PC-9 (cell line): ENCODE measurements at regions of chr5 and their contacts with region 1.

Region 1: DNA sequence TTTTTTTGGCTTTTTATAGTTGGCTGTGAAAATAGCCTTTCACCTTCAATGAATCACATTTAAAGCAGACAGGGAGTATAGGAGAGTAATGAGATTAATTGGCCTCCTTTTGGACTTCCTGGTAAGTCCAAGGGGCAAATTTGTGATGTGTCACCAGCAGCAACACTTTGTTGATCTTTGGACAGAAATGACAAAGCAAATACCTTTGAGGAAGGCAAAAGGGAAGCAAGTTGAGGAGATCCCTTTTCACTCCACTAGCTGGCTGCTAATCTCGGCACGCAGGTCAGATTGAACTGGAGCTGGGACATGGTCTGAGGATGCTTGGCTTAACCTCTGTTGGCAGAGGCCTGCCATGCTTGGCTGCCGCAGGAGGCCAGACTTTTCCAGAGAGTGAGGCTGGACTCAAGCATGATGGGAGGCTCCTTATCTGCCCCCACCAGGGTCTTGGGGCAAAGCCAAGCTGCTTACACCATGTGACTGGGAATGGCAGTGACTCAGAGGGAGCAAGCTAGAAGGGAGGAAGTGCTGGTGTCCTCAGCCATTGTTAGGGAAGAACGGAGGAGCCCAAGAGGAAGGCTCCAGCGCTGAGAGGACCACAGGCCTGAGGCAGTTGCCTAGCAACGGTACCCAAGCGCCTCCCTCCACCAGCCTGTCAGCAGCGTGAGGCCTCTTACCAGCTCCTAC is 174.5 kb upstream of the MAP1B start:
- DNase-seq: peak; percentile 77 to 99
- H3K4me3 ChIP-seq: no peak overlapping the region
- H3K27ac ChIP-seq: peak overlapping the region; percentile 97
- H3K4me1 ChIP-seq: peaks cover 42% of the 10 kb centered on the region
- H3K27me3 ChIP-seq: no peaks in the 10 kb centered on the region
- CTCF ChIP-seq: peak; percentile 38; the same call in 1 of the 2 replicates

Region 2: DNA sequence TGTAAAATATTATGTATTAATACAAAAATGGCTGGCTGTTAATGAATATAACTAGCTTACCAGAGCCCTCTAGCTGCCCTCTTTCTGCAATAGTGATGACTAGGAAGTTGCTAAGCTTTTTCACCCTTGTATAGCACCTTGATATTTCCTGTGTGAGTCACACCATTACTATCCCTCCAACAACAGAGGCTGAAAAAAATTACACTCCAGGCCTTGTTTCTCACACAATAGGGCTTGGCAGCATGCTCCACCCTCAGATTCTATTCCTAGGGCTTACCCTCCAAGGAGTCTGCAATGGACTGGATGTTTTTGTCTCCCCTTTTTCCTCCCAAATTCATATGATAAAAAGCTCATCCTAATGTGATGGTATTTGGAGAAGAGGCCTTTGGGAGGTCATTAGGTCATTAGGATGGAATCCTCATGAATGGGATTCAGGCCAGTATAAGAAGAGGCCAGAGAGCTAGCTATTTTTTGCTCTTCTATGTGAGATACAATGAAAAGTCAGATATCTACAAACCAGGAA is 10.2 kb before region 1 on chr5:
- CTCF ChIA-PET with region 1: interaction called, 5 read pairs
- POLR2A ChIA-PET with region 1: interaction called, 19 read pairs
- intact Hi-C with region 1: no loop called
- DNase-seq: peak; percentile 66 to 92
- H3K4me3 ChIP-seq: no peak overlapping the region
- H3K27ac ChIP-seq: peak overlapping the region; percentile 94
- H3K4me1 ChIP-seq: peaks cover 36% of the 10 kb centered on the region
- H3K27me3 ChIP-seq: no peaks in the 10 kb centered on the region
- CTCF ChIP-seq: no peak

Region 3: DNA sequence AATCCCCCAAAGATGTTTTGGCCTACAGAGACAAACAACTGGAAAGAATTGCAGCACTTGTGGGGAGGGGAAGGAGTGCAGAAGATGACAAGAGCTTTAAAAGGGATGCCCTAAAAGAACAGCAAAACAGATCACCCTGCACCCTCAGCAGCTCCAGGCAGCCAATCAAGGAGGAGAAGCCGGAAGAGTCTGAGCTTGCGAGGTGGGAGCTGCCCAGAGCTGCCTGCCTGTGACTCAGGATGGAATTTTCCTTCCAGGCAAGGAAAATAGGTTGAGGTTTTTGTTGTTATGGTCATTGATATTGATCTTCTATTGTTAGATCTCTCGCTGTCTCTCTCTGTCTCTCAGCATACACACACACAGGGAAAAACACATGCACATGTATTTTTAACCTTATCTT is 104.2 kb after region 1 on chr5:
- CTCF ChIA-PET with region 1: no interaction called
- POLR2A ChIA-PET with region 1: interaction called, 13 read pairs
- intact Hi-C with region 1: no loop called
- DNase-seq: peak in 1 of 2 experiments; percentile 51
- H3K4me3 ChIP-seq: no peak overlapping the region
- H3K27ac ChIP-seq: no peak overlapping the region
- H3K4me1 ChIP-seq: peaks cover 8% of the 10 kb centered on the region; the same call in 1 of the 2 replicates
- H3K27me3 ChIP-seq: no peaks in the 10 kb centered on the region
- CTCF ChIP-seq: no peak

Region 4: GRCh38 chr5:72108202-72109061 is 175.6 kb after region 1 on chr5:
- CTCF ChIA-PET with region 1: no interaction called
- POLR2A ChIA-PET with region 1: interaction called, 4 read pairs
- intact Hi-C with region 1: loop called (anchors 1 kb)
- DNase-seq: peak; percentile 56 to 66
- H3K4me3 ChIP-seq: peak overlapping the region; percentile 100
- H3K27ac ChIP-seq: peak overlapping the region; percentile 69
- H3K4me1 ChIP-seq: peaks cover 20% of the 10 kb centered on the region
- H3K27me3 ChIP-seq: no peaks in the 10 kb centered on the region
- CTCF ChIP-seq: no peak

Region 5: DNA sequence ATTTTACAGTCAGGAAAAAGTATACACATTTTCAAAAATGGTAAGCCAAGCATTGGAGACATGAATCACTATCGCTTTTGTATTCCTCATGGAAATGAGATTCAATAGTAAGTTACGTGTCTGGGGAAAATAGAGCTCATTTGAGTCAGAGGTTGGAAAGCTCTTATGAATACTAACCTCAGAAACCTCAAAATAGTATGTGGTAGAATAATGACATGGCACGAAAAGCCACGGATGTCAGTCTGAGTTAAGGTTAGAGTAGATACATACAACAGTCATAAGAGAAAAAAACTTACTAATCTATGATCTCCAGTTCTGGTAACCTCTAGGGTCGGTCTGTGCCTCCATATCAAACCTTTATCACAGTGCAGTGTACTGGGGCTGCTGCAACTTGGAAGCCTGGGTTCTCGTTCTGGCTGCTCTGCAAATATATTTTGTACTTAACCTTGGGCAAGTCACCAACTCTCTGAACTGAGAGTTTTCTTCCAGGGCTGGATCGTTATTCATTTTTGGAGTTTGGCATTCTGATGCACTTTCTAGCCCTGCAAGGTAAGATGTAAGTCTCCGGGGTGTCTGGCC is 206.2 kb after region 1 on chr5:
- CTCF ChIA-PET with region 1: no interaction called
- POLR2A ChIA-PET with region 1: no interaction called
- intact Hi-C with region 1: loop called (anchors 10 kb)
- DNase-seq: no peak
- H3K4me3 ChIP-seq: no peak overlapping the region
- H3K27ac ChIP-seq: no peak overlapping the region
- H3K4me1 ChIP-seq: peaks cover 27% of the 10 kb centered on the region
- H3K27me3 ChIP-seq: no peaks in the 10 kb centered on the region
- CTCF ChIP-seq: no peak

Region 6: DNA sequence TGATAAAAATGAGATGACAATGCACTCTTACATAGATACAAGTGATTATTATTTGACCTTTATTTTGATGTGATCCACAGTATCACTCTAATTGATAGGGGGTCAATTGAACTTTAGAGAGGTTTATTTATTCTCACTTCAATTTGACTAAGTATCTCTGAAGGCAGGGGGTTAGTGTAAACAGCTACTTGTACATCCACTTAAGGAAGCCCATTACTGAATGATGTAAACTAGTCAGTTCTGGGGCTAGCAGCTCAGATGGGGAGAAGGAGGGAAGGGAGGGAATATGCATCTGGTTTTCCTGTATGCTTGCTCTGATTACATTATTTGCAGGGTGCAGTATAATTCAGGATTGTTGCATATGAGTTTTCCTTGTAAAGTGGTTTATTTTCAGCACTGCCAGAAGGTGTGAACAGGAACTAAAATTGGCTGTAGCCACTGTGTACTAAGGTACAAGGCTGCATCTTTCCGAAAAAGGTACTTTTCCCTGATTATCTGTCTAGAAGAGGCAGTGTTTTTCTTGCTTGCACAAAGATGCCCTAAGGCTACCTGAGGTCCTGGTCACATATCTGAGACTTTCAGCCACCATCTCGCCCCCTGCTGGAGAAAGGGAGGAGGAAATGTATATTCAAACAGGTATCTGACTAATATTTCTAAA is 336.1 kb after region 1 on chr5:
- CTCF ChIA-PET with region 1: no interaction called
- POLR2A ChIA-PET with region 1: no interaction called
- intact Hi-C with region 1: loop called (anchors 10 kb)
- DNase-seq: peak; percentile 61 to 66
- H3K4me3 ChIP-seq: no peak overlapping the region
- H3K27ac ChIP-seq: no peak overlapping the region
- H3K4me1 ChIP-seq: no peaks in the 10 kb centered on the region
- H3K27me3 ChIP-seq: no peaks in the 10 kb centered on the region
- CTCF ChIP-seq: peak; percentile 89

Region 7: GRCh38 chr5:72307968-72308852 is 375.4 kb after region 1 on chr5:
- CTCF ChIA-PET with region 1: no interaction called
- POLR2A ChIA-PET with region 1: no interaction called
- intact Hi-C with region 1: loop called (anchors 10 kb)
- DNase-seq: peak; percentile 93 to 97
- H3K4me3 ChIP-seq: peak overlapping the region; percentile 73
- H3K27ac ChIP-seq: peak overlapping the region; percentile 86
- H3K4me1 ChIP-seq: peaks cover 13% of the 10 kb centered on the region
- H3K27me3 ChIP-seq: no peaks in the 10 kb centered on the region
- CTCF ChIP-seq: peak; percentile 77